HAP-1 (cell line): ENCODE measurements at regions of chr11 and their contacts with region 1.

Region 1: GRCh38 chr11:36306888-36307287 is 10.8 kb downstream of the PRR5L start:
- DNase-seq: peak; percentile 22 to 55
- H3K4me3 ChIP-seq: no peak overlapping the region
- H3K4me1 ChIP-seq: no peaks in the 10 kb centered on the region
- H3K27me3 ChIP-seq: no peaks in the 10 kb centered on the region

Region 2: GRCh38 chr11:35800970-35801953 is 505.6 kb before region 1 on chr11:
- in situ Hi-C with region 1: no loop called
- DNase-seq: no peak
- H3K4me3 ChIP-seq: no peak overlapping the region
- H3K4me1 ChIP-seq: no peaks in the 10 kb centered on the region
- H3K27me3 ChIP-seq: no peaks in the 10 kb centered on the region

Region 3: GRCh38 chr11:36478700-36479329 is 171.9 kb after region 1 on chr11:
- in situ Hi-C with region 1: loop called (anchors 10 kb)
- DNase-seq: peak; percentile 39 to 55
- H3K4me3 ChIP-seq: no peak overlapping the region
- H3K4me1 ChIP-seq: no peaks in the 10 kb centered on the region
- H3K27me3 ChIP-seq: no peaks in the 10 kb centered on the region